ENCODE measurements at regions of chr1 and their contacts with region 1.

Region 1: DNA sequence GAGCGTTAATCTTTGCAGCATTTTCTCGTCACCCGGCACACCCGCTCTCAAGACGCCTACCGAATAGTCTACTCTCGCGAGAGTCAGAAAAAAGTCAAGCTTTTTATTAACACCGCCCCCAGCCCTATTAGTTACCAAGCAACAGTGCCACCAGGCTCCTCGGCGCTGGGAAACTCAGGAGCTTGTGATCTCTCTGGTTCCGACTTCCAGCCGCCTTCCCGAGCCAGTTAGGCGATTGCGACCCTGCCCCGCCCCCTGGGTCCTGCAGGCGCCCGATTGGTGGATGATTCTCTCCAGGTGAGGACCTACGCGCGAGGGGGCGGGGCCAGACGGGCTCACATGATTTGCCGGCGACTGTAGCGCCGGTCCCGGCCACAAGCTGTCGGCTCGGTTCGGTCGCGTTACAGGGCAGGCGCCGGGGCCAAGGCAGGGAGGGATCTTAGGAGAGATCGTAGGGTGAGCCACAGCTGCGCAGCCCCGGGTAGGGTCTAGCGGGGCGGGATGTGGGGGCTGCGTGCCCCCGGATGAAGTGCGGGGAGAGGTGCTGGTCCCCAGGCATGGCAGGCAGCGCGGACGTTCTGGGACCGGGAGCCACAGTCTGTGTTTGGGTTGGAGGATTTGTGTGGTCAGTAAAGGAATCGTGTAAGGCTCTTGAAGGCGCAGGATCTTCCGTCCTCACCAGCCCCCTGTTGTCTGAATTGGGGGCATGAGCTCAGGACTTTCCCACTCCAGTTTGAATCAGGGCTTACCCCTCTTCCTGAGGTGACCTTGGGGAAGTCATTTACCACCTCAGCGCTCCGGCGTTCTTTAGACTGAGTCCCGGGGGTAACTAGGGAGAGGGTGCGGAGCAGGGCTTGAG is at the start of gene PFKFB2:
- DNase-seq: peak; percentile 93 to 97 (median 96)
- ATAC-seq: peak; percentile 93
- H3K4me3 ChIP-seq: peak within 1 kb of the TSS; percentile 85
- H3K4me3 Mint-ChIP-seq: peak within 1 kb of the TSS; percentile 95 to 100 (median 98)
- H3K27ac ChIP-seq: peak within 1 kb of the TSS; percentile 72
- H3K27ac Mint-ChIP-seq: peak within 1 kb of the TSS; percentile 86 to 100 (median 97)
- H3K4me1 ChIP-seq: peaks cover 11 to 16% of the 10 kb centered on the region in 2 donors
- H3K4me1 Mint-ChIP-seq: peaks cover 25 to 54% (median 49%) of the 10 kb centered on the region in 7 donors
- H3K27me3 ChIP-seq: no peaks in the 10 kb centered on the region
- H3K27me3 Mint-ChIP-seq: peaks cover 0 to 12% (median 0%) of the 10 kb centered on the region in 5 donors
- total RNA-seq, gene PFKFB2: 2.3 to 4.6 (median 3.8) TPM

Region 2: DNA sequence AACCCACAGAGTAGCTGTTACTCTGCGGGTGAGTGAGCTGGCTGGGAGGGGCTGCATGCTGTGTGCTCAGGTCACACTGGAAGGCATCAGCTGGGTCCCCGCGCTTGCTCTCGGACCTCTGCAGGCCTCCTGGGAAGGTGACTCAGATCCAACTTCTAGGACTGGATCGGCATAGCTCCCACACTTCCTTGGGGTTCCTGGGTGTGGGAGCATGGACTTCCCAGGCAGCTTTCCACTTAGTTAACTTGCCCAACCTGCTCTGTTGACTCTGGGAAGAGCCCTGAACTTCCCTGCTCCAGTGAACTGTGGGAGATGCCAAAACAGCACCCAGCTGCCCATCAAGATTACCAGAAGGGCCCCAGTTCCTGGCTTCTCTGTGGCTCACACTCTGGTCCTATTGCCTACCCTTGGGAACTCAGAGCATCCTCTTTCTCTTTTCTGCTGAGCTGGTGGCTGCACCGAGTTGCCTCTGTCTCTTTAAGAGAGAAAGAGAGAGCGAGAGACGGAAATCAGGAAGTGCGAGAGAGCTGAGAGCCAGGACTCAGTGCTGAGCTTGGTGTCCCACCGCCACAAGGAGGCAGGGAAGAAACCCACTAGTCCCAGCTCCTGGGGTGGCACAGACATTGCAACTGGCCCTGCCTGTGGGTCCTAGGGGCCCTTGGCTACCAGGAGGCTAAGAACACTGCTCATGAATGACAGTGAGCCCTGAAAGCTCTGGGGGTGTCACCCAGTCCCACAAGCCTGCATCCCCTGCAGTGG is 583.0 kb before region 1 on chr1 and contains the start of gene IKBKE:
- CTCF ChIA-PET with region 1: no interaction called
- POLR2A ChIA-PET with region 1: no interaction called
- intact Hi-C with region 1: loop called in 1 of 2 experiments (anchors 2 kb)
- DNase-seq: peak in 8 of 9 donors; percentile 37 to 58 (median 44)
- ATAC-seq: peak; percentile 74
- H3K4me3 ChIP-seq: peak within 1 kb of the TSS; percentile 98
- H3K4me3 Mint-ChIP-seq: peak within 1 kb of the TSS; percentile 88 to 95 (median 93)
- H3K27ac ChIP-seq: peak within 1 kb of the TSS; percentile 78
- H3K27ac Mint-ChIP-seq: peak within 1 kb of the TSS; percentile 75 to 97 (median 86)
- H3K4me1 ChIP-seq: peaks cover 64 to 66% of the 10 kb centered on the region in 2 donors
- H3K4me1 Mint-ChIP-seq: peaks cover 55 to 86% (median 78%) of the 10 kb centered on the region in 7 donors
- H3K27me3 ChIP-seq: no peaks in the 10 kb centered on the region
- H3K27me3 Mint-ChIP-seq: no peaks in the 10 kb centered on the region
- total RNA-seq, gene IKBKE: 50.1 to 177 (median 79.1) TPM

Region 3: GRCh38 chr1:206814716-206815341 is 238.3 kb before region 1 on chr1:
- CTCF ChIA-PET with region 1: no interaction called
- POLR2A ChIA-PET with region 1: no interaction called
- intact Hi-C with region 1: loop called in 1 of 2 experiments (anchors 5 kb)
- DNase-seq: no peak
- ATAC-seq: peak; percentile 38
- H3K4me3 ChIP-seq: no peak overlapping the region
- H3K4me3 Mint-ChIP-seq: no peak overlapping the region
- H3K27ac ChIP-seq: no peak overlapping the region
- H3K27ac Mint-ChIP-seq: peak overlapping the region in 7 of 9 donors; percentile 8 to 97 (median 41)
- H3K4me1 ChIP-seq: peaks cover 0 to 14% of the 10 kb centered on the region in 2 donors
- H3K4me1 Mint-ChIP-seq: peaks cover 20 to 53% (median 44%) of the 10 kb centered on the region in 7 donors
- H3K27me3 ChIP-seq: no peaks in the 10 kb centered on the region
- H3K27me3 Mint-ChIP-seq: no peaks in the 10 kb centered on the region

Region 4: GRCh38 chr1:207070811-207071210 is 17.7 kb after region 1 on chr1:
- CTCF ChIA-PET with region 1: interaction called, 9 read pairs
- POLR2A ChIA-PET with region 1: interaction called, 10 read pairs
- intact Hi-C with region 1: loop called in 1 of 2 experiments (anchors 1 kb)
- DNase-seq: no peak
- ATAC-seq: peak; percentile 65
- H3K4me3 ChIP-seq: peak overlapping the region; percentile 11
- H3K4me3 Mint-ChIP-seq: peak overlapping the region; percentile 63 to 87 (median 72)
- H3K27ac ChIP-seq: peak overlapping the region; percentile 38
- H3K27ac Mint-ChIP-seq: peak overlapping the region; percentile 69 to 95 (median 71)
- H3K4me1 ChIP-seq: peaks cover 6 to 29% of the 10 kb centered on the region in 2 donors
- H3K4me1 Mint-ChIP-seq: peaks cover 26 to 47% (median 42%) of the 10 kb centered on the region in 7 donors
- H3K27me3 ChIP-seq: no peaks in the 10 kb centered on the region
- H3K27me3 Mint-ChIP-seq: peaks cover 0 to 19% (median 0%) of the 10 kb centered on the region in 5 donors

Region 5: GRCh38 chr1:207077470-207078377 is 24.6 kb after region 1 on chr1:
- CTCF ChIA-PET with region 1: interaction called, 19 read pairs
- POLR2A ChIA-PET with region 1: interaction called, 5 read pairs
- intact Hi-C with region 1: loop called (anchors 1 kb)
- DNase-seq: peak; percentile 21 to 85 (median 78)
- ATAC-seq: peak; percentile 98
- H3K4me3 ChIP-seq: no peak overlapping the region
- H3K4me3 Mint-ChIP-seq: no peak overlapping the region
- H3K27ac ChIP-seq: no peak overlapping the region
- H3K27ac Mint-ChIP-seq: peak overlapping the region in 3 of 9 donors; percentile 5 to 63 (median 28)
- H3K4me1 ChIP-seq: no peaks in the 10 kb centered on the region
- H3K4me1 Mint-ChIP-seq: peaks cover 0 to 14% (median 5%) of the 10 kb centered on the region in 7 donors
- H3K27me3 ChIP-seq: no peaks in the 10 kb centered on the region
- H3K27me3 Mint-ChIP-seq: peaks cover 0 to 52% (median 0%) of the 10 kb centered on the region in 5 donors

Region 6: GRCh38 chr1:207493212-207493611 is 440.1 kb after region 1 on chr1:
- CTCF ChIA-PET with region 1: no interaction called
- POLR2A ChIA-PET with region 1: no interaction called
- intact Hi-C with region 1: no loop called
- DNase-seq: no peak
- ATAC-seq: no peak
- H3K4me3 ChIP-seq: no peak overlapping the region
- H3K4me3 Mint-ChIP-seq: no peak overlapping the region
- H3K27ac ChIP-seq: no peak overlapping the region
- H3K27ac Mint-ChIP-seq: no peak overlapping the region
- H3K4me1 ChIP-seq: peaks cover 0 to 6% of the 10 kb centered on the region in 2 donors
- H3K4me1 Mint-ChIP-seq: peaks cover 6 to 17% (median 8%) of the 10 kb centered on the region in 7 donors
- H3K27me3 ChIP-seq: peaks cover 0 to 3% of the 10 kb centered on the region in 2 donors
- H3K27me3 Mint-ChIP-seq: peaks cover 5 to 29% (median 14%) of the 10 kb centered on the region in 5 donors

Region 7: DNA sequence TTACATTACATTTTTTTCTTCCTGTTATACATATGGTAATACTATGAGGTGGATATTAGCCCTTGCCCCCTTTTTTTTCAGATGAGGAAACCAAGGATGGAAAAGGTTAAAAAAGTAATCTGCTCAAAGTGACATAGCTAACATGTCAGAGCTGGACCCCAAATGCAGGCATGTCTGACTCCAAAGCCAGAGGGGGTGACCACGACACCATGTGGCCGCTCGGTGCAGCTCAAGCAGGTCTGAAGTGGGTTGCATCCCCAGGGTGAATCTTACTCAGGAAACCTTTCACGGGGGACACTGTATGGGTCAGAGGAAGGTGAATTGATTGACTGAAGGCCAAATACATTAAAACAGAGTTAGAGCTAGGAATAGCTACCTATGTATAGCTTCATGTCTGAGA is 823.0 kb after region 1 on chr1:
- CTCF ChIA-PET with region 1: no interaction called
- POLR2A ChIA-PET with region 1: no interaction called
- intact Hi-C with region 1: loop called in 1 of 2 experiments (anchors 5 kb)
- DNase-seq: no peak
- ATAC-seq: no peak
- H3K4me3 ChIP-seq: no peak overlapping the region
- H3K4me3 Mint-ChIP-seq: peak overlapping the region in 2 of 10 donors; percentile 16 to 39
- H3K27ac ChIP-seq: no peak overlapping the region
- H3K27ac Mint-ChIP-seq: peak overlapping the region in 7 of 9 donors; percentile 29 to 93 (median 69)
- H3K4me1 ChIP-seq: peaks cover 20 to 38% of the 10 kb centered on the region in 2 donors
- H3K4me1 Mint-ChIP-seq: peaks cover 48 to 62% (median 57%) of the 10 kb centered on the region in 7 donors
- H3K27me3 ChIP-seq: no peaks in the 10 kb centered on the region
- H3K27me3 Mint-ChIP-seq: no peaks in the 10 kb centered on the region

Measured in naive thymus-derived CD4-positive, alpha-beta T cell (primary cell).